HAP-1 (cell line): ENCODE measurements at regions of chr14 and their contacts with region 1.

Region 1: GRCh38 chr14:56339855-56340701 is 221.9 kb downstream of the PELI2 start:
- DNase-seq: peak; percentile 86 to 87
- H3K4me3 ChIP-seq: no peak overlapping the region
- H3K4me1 ChIP-seq: peaks cover 4% of the 10 kb centered on the region
- H3K27me3 ChIP-seq: no peaks in the 10 kb centered on the region

Region 2: DNA sequence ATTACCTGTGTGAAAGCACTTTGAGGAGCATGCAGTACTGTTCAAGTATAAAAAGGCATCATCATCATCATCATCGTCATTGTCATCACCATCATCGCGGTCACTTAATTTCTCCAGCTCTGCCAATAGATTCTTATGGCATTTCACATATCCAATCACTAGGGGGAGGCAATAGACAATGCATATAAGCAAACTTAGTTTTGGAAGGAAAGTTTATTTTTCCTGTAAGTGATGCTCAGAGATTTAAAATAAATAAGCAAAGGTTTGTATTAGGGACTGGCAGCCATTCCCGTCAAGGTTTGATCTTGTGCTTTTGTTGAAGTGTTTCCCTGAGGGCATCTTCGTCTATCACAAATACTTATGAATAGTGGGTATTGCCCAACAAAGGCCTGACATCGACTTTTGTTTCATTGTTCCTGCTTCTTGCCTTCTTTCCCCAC is 632.7 kb before region 1 on chr14:
- in situ Hi-C with region 1: loop called (anchors 10 kb)
- DNase-seq: peak in 1 of 2 experiments; percentile 40
- H3K4me3 ChIP-seq: no peak overlapping the region
- H3K4me1 ChIP-seq: no peaks in the 10 kb centered on the region; the same call in 1 of the 2 replicates
- H3K27me3 ChIP-seq: no peaks in the 10 kb centered on the region

Region 3: GRCh38 chr14:55731881-55732498 is 608.1 kb before region 1 on chr14:
- in situ Hi-C with region 1: loop called (anchors 10 kb)
- DNase-seq: peak; percentile 14 to 77
- H3K4me3 ChIP-seq: no peak overlapping the region
- H3K4me1 ChIP-seq: peaks cover 11% of the 10 kb centered on the region
- H3K27me3 ChIP-seq: no peaks in the 10 kb centered on the region

Region 4: GRCh38 chr14:55864890-55865655 is 475.0 kb before region 1 on chr14:
- in situ Hi-C with region 1: loop called (anchors 10 kb)
- DNase-seq: peak; percentile 77 to 84
- H3K4me3 ChIP-seq: no peak overlapping the region
- H3K4me1 ChIP-seq: peaks cover 9% of the 10 kb centered on the region
- H3K27me3 ChIP-seq: no peaks in the 10 kb centered on the region